IMR-90 (cell line): ENCODE measurements at regions of chr6 and their contacts with region 1.

Region 1: DNA sequence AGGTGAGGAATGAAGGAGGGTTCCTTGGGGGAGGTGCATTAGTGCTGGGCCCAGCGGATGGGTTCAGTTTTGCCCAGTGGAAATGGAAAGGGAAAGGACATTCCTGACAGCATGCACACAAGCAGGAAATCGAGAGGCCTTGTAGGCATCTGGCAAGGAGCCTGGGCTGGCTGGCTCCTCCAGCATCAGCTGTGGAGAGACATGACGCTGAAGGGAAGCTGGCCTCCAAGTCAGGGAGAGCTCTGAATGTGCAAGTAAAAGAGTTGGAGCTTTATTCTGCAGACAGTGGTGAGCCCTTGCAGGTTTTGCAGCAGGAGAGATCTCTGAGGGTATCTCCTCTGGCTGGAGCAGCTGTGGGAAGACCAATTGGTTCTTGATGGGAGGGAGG is 154.3 kb downstream of the MRPL14 start:
- DNase-seq: peak; percentile 95
- ATAC-seq: peak; percentile 83
- H3K4me3 ChIP-seq: no peak overlapping the region
- H3K27ac ChIP-seq: peak overlapping the region; percentile 64
- H3K4me1 ChIP-seq: peaks cover 23% of the 10 kb centered on the region
- H3K27me3 ChIP-seq: no peaks in the 10 kb centered on the region
- CTCF ChIP-seq: no peak
- POLR2A ChIP-seq: no peak
- RAD21 ChIP-seq: no peak; the same call in 1 of the 2 replicates

Region 2: DNA sequence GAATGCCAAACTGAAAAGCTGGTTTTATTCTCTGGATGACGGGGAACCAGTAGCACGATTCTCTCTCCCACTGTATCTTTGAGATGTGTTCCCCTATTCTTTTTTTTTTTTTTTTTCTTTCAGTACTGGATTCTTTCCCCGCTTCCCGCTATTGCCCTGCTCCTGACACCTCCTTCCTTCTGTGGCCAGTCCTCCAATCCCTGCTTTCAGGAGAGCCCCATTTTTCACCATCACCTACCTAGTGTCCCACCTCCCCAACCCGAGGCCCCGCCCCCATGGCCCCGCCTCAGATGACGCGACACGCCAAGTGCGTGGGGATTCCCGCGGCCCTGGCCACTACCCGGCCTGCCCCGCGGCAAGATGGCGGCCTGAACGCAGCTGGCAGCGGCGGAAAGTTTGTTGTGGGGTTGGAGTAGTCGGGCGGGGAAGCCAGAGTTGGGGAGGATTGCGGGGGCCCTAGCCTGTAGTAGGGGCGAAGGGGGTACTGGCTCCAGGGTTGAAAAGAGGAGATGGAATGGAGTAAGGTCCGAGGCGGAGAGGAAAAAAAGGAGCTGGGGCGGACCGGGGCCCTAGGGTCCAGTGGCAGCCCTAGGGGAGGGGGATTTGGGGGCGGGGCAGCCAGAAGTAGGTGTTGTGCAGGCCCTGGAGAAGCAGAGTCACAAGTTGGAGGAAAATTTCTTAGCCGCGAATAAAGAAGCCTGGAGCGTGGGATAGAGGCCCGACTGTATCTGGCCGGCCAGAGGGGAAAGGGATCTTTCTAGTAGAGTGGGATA is 495.5 kb before region 1 on chr6 and contains the start of gene TJAP1:
- CTCF ChIA-PET with region 1: no interaction called
- POLR2A ChIA-PET with region 1: interaction called, 18 read pairs
- dilution Hi-C with region 1: no loop called
- in situ Hi-C with region 1: no loop called
- intact Hi-C with region 1: no loop called
- DNase-seq: peak; percentile 78
- ATAC-seq: peak; percentile 100
- H3K4me3 ChIP-seq: peak within 1 kb of the TSS; percentile 66
- H3K27ac ChIP-seq: peak within 1 kb of the TSS; percentile 83
- H3K4me1 ChIP-seq: peaks cover 7% of the 10 kb centered on the region
- H3K27me3 ChIP-seq: no peaks in the 10 kb centered on the region
- CTCF ChIP-seq: no peak
- POLR2A ChIP-seq: peak; percentile 94
- RAD21 ChIP-seq: no peak
- total RNA-seq, gene TJAP1: 12.2 and 12.5 TPM in 2 replicates

Region 3: GRCh38 chr6:43990627-43991619 is 18.0 kb after region 1 on chr6:
- CTCF ChIA-PET with region 1: no interaction called
- POLR2A ChIA-PET with region 1: no interaction called
- dilution Hi-C with region 1: no loop called
- in situ Hi-C with region 1: no loop called
- intact Hi-C with region 1: loop called (anchors 2 kb)
- DNase-seq: peak; percentile 89
- ATAC-seq: peak; percentile 85
- H3K4me3 ChIP-seq: no peak overlapping the region
- H3K27ac ChIP-seq: peak overlapping the region; percentile 72
- H3K4me1 ChIP-seq: peaks cover 21% of the 10 kb centered on the region
- H3K27me3 ChIP-seq: peaks cover 9% of the 10 kb centered on the region
- CTCF ChIP-seq: no peak
- POLR2A ChIP-seq: no peak
- RAD21 ChIP-seq: no peak